ENCODE measurements at regions of chr9 and their contacts with region 1.

Region 1: DNA sequence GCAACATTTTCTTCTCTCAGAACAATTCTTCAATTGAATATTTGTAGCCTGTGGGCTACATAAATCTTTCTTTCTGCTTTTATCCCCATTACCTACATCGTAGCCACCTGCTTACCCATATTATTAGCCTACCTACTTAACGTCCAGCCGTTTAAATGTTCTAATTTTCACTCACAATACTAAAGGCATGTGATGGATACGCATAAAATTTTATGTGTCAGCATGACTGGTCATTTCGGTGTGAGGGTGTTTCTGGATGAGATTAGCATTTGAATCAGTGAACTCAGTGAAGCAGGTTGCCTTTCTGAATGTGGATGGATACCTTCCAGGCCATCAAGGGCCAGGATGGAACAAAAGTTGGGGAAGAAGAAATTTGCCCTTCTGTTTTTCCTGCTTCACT is 1722.5 kb upstream of the ACO1 start:
- DNase-seq: no peak
- H3K4me3 ChIP-seq: no peak overlapping the region
- H3K27ac ChIP-seq: no peak overlapping the region
- H3K4me1 ChIP-seq: no peaks in the 10 kb centered on the region
- CTCF ChIP-seq: no peak

Region 2: DNA sequence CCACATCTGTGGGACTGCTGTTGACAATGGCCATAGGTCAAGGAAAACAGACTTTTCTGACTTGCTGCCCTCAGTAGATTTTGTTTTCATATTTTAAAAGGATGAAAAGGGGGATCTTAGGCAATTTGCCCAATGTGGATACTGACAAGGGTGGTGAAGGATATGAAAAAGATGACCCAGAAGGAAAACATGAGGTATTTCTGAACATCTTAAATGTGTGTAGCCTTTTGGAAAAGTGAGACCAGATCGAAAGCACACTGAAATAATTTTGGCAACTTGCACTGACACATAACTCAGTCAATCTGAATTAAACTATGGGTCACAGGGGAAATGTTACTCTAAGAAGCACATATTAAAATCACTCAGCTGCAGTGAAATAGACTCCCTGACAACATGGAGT is 70.5 kb before region 1 on chr9:
- CTCF ChIA-PET with region 1: no interaction called
- POLR2A ChIA-PET with region 1: no interaction called
- intact Hi-C with region 1: loop called (anchors 10 kb)
- DNase-seq: no peak
- H3K4me3 ChIP-seq: no peak overlapping the region
- H3K27ac ChIP-seq: no peak overlapping the region
- H3K4me1 ChIP-seq: no peaks in the 10 kb centered on the region
- CTCF ChIP-seq: no peak

Region 3: DNA sequence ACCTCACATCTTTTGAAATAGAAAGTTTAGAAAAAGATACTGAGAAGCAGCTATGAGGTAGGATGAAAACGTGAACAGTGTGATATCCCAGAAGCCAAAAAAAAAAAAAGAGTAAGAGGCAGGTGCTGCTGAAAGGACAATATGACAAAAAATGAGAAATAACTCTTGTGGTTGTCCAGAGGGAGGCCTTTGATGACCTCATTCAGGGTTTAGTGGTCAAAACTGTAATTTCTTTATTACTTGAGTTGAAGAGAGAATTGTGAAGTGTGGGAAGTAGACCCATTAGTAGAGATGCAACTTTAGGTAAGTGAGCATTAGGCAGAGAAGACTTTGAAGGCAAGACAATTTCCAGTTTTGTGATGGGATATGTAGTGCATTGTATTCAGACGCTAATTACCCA is 416.2 kb after region 1 on chr9:
- CTCF ChIA-PET with region 1: no interaction called
- POLR2A ChIA-PET with region 1: no interaction called
- intact Hi-C with region 1: no loop called
- DNase-seq: no peak
- H3K4me3 ChIP-seq: no peak overlapping the region
- H3K27ac ChIP-seq: no peak overlapping the region
- H3K4me1 ChIP-seq: no peaks in the 10 kb centered on the region
- CTCF ChIP-seq: no peak

Measured in OCI-LY7 (cell line).